Activated naive CD4-positive, alpha-beta T cell treated with anti-CD3 and anti-CD28 coated beads for 36 hours (primary cell): ENCODE measurements at regions of chr5 and their contacts with region 1.

Region 1: DNA sequence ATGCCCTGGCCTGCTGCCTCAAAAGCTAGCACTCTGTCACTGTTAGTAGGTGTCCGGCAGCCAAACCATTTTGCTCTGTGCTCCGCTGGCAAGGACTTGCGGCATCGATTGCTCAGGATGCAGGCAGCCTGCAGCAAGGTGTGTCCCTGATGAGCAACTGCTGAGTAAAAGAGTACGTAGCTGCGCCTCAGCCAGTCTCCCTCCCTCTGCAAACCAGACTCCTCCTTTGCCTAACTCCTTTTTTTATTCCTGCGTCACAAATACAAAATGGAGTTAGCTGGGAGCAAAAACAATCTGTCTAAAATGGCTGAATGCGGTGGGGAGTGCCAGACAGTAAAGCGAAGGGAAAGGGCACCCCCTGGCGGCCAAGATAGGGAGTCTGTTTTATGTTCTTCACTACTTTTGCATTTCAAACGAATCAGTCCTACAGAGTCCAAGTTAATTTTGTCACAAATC is 61.1 kb downstream of the DIAPH1 start:
- DNase-seq: peak; percentile 81
- H3K4me3 Mint-ChIP-seq: no peak overlapping the region
- H3K27ac Mint-ChIP-seq: peak overlapping the region; percentile 16
- H3K4me1 Mint-ChIP-seq: peaks cover 22% of the 10 kb centered on the region
- H3K27me3 Mint-ChIP-seq: no peaks in the 10 kb centered on the region

Region 2: GRCh38 chr5:141186897-141187512 is 370.7 kb before region 1 on chr5 and contains the start of gene PCDHB9:
- CTCF ChIA-PET with region 1: no interaction called
- intact Hi-C with region 1: loop called (anchors 10 kb)
- DNase-seq: peak; percentile 60
- H3K4me3 Mint-ChIP-seq: no peak within 1 kb of the TSS
- H3K27ac Mint-ChIP-seq: no peak within 1 kb of the TSS
- H3K4me1 Mint-ChIP-seq: peaks cover 2% of the 10 kb centered on the region
- H3K27me3 Mint-ChIP-seq: peaks cover 38% of the 10 kb centered on the region
- total RNA-seq, gene PCDHB9: not detected

Region 3: GRCh38 chr5:141245250-141245717 is 312.4 kb before region 1 on chr5 and contains the start of gene PCDHB15:
- CTCF ChIA-PET with region 1: no interaction called
- intact Hi-C with region 1: no loop called
- DNase-seq: peak; percentile 44
- H3K4me3 Mint-ChIP-seq: peak within 1 kb of the TSS; percentile 27
- H3K27ac Mint-ChIP-seq: no peak within 1 kb of the TSS
- H3K4me1 Mint-ChIP-seq: no peaks in the 10 kb centered on the region
- H3K27me3 Mint-ChIP-seq: peaks cover 48% of the 10 kb centered on the region
- total RNA-seq, gene PCDHB15: not detected

Region 4: DNA sequence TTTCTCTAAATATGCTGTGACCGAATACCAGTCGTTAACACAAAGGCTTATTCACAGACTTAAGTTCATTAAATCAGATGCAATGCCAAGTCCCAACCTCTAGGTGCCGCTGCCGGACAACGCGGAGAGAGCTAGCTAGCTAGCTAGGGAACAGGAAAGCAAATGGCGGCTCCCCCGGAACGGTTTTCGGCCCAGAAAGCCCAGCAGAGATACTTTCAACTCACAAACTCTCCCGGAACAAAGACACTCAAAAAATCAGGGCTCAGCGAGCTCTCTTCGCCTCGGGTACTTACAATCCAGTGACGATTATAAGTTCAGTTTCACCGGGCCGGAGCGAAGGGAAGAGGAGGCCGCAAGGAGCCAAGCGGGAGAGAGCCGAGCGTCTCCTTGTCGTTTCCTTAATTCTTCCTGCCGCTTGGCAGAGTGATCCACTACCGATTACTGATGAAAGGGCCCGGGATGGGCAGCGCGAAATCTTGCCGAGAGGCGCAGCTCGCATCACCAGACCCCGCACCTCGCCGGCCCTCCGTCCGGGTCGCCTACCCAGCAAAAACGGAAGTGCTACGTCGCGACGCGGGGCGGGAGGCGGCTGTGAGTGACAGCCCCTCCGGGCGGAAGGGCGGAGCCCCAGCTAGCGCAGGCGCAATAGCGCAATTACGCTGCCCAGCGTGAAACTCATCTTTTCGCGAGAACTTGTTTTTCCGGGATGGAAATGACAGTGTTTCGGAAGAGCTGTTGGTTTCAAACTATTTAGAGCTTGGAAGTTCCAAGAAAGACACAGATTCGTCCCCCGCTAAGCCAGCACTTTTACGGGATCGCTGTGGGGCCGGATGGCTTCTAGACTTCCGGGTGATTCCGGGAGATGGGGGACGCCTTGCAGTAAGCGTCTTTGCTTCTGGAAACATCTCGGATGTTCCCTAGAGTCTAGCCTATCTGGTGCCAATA is 237.2 kb before region 1 on chr5 and contains the start of gene TAF7:
- CTCF ChIA-PET with region 1: interaction called, 10 read pairs
- intact Hi-C with region 1: no loop called
- DNase-seq: peak; percentile 95
- H3K4me3 Mint-ChIP-seq: peak within 1 kb of the TSS; percentile 97
- H3K27ac Mint-ChIP-seq: peak within 1 kb of the TSS; percentile 99
- H3K4me1 Mint-ChIP-seq: peaks cover 25% of the 10 kb centered on the region
- H3K27me3 Mint-ChIP-seq: no peaks in the 10 kb centered on the region
- total RNA-seq, gene TAF7: 57.0 to 57.9 TPM

Region 5: GRCh38 chr5:141430332-141431113 is 127.2 kb before region 1 on chr5 and contains the start of gene PCDHGA12:
- CTCF ChIA-PET with region 1: interaction called, 4 read pairs
- intact Hi-C with region 1: loop called (anchors 1 kb)
- DNase-seq: peak; percentile 65
- H3K4me3 Mint-ChIP-seq: peak within 1 kb of the TSS; percentile 53
- H3K27ac Mint-ChIP-seq: no peak within 1 kb of the TSS
- H3K4me1 Mint-ChIP-seq: peaks cover 15% of the 10 kb centered on the region
- H3K27me3 Mint-ChIP-seq: peaks cover 54% of the 10 kb centered on the region
- total RNA-seq, gene PCDHGA12: not detected

Region 6: GRCh38 chr5:141512390-141512910 is 45.3 kb before region 1 on chr5:
- CTCF ChIA-PET with region 1: interaction called, 23 read pairs
- intact Hi-C with region 1: no loop called
- DNase-seq: peak; percentile 92
- H3K4me3 Mint-ChIP-seq: peak overlapping the region; percentile 73
- H3K27ac Mint-ChIP-seq: no peak overlapping the region
- H3K4me1 Mint-ChIP-seq: peaks cover 33% of the 10 kb centered on the region
- H3K27me3 Mint-ChIP-seq: no peaks in the 10 kb centered on the region

Region 7: GRCh38 chr5:141547488-141547887 is 10.2 kb before region 1 on chr5:
- CTCF ChIA-PET with region 1: interaction called, 10 read pairs
- intact Hi-C with region 1: no loop called
- DNase-seq: no peak
- H3K4me3 Mint-ChIP-seq: no peak overlapping the region
- H3K27ac Mint-ChIP-seq: no peak overlapping the region
- H3K4me1 Mint-ChIP-seq: peaks cover 21% of the 10 kb centered on the region
- H3K27me3 Mint-ChIP-seq: no peaks in the 10 kb centered on the region

Region 8: GRCh38 chr5:141878711-141879425 is 321.2 kb after region 1 on chr5:
- CTCF ChIA-PET with region 1: no interaction called
- intact Hi-C with region 1: no loop called
- DNase-seq: peak; percentile 96
- H3K4me3 Mint-ChIP-seq: peak overlapping the region; percentile 65
- H3K27ac Mint-ChIP-seq: no peak overlapping the region
- H3K4me1 Mint-ChIP-seq: peaks cover 19% of the 10 kb centered on the region
- H3K27me3 Mint-ChIP-seq: peaks cover 62% of the 10 kb centered on the region